ENCODE measurements at regions of chr12 and their contacts with region 1.

Region 1: DNA sequence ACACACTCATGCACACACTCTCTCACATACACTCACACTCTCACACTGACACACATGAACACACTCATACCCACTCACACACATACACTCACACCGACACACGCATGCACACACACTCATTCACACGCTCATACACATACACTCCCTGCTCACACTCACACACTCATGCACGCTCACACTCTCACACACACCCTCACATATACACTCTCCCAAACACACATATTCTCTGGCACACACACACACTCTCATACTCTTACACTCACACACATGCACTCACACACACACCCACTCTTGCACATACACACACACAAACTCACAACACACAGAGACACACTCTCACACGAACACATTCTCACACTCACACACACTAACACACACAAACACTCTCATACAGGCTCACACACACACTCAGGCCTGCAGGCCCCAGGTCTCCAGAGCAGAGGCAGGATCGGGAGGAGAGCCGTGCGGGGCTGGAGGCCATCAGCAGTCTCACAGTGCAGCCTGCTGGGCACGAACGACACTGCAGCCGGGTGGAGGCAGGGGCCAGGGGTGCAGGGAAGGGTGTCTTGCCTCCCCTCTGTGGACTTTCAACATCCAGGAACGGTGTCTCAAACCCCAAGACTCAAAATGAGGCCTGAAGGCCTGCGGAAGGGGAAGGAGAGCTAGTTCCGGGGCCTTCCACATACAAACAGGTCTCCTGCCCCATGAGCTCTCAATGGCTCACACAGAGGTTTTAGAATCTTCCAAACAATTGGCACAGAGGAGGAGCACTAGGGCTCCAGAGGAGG is 148.7 kb downstream of the ANO2 start:
- DNase-seq: peak; percentile 19 to 85 (median 62)
- ATAC-seq: peak; percentile 76 to 92 (median 88)
- H3K4me3 ChIP-seq: no peak overlapping the region
- H3K27ac ChIP-seq: no peak overlapping the region
- H3K4me1 ChIP-seq: no peaks in the 10 kb centered on the region
- H3K27me3 ChIP-seq: no peaks in the 10 kb centered on the region
- CTCF ChIP-seq: peak; percentile 18 to 60 (median 54)

Region 2: GRCh38 chr12:5745265-5745888 is 51.0 kb before region 1 on chr12:
- intact Hi-C with region 1: loop called in 1 of 3 experiments (anchors 5 kb)
- DNase-seq: peak in 5 of 6 donors; percentile 50 to 82 (median 70)
- ATAC-seq: peak; percentile 82 to 93 (median 90)
- H3K4me3 ChIP-seq: no peak overlapping the region
- H3K27ac ChIP-seq: no peak overlapping the region
- H3K4me1 ChIP-seq: no peaks in the 10 kb centered on the region
- H3K27me3 ChIP-seq: no peaks in the 10 kb centered on the region
- CTCF ChIP-seq: peak; percentile 64 to 74 (median 72)

Region 3: GRCh38 chr12:6092784-6093722 is 296.7 kb after region 1 on chr12:
- intact Hi-C with region 1: no loop called
- DNase-seq: no peak
- ATAC-seq: peak in 3 of 4 donors; percentile 38 to 70 (median 62)
- H3K4me3 ChIP-seq: no peak overlapping the region
- H3K27ac ChIP-seq: no peak overlapping the region
- H3K4me1 ChIP-seq: no peaks in the 10 kb centered on the region
- H3K27me3 ChIP-seq: no peaks in the 10 kb centered on the region
- CTCF ChIP-seq: no peak

Measured in pancreas (tissue), 10 donors.